Activated CD4-positive, alpha-beta memory T cell treated with anti-CD3 and anti-CD28 coated beads, Interleukin-2, amount 10 ng/mL, durations not matched to agents 7 days and 5 days (primary cell): ENCODE measurements at regions of chr10 and their contacts with region 1.

Region 1: GRCh38 chr10:99612167-99612831 is 7.9 kb downstream of the SLC25A28 start:
- DNase-seq: peak; percentile 25
- H3K4me3 Mint-ChIP-seq: no peak overlapping the region
- H3K27ac Mint-ChIP-seq: no peak overlapping the region
- H3K4me1 Mint-ChIP-seq: peaks cover 39% of the 10 kb centered on the region
- H3K27me3 Mint-ChIP-seq: no peaks in the 10 kb centered on the region

Region 2: DNA sequence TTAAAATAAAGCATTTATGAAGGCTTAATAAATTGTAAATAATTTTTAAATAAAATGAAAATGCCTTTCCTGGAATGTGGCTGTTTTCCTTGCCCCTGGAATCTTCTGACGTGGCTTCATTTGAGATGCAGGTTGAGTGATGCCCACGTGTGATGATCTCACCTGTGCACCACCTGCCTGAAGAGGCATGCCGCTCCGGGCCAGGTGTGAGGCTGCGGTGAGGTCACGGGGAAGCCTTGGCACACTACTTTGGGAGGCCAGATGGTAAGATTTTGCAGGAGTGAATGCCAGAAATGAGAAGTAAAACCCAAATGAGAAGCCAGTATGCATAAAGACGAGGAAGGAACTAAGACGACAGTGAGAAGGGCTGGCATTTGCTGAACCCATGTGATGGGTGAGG is 218.0 kb before region 1 on chr10:
- CTCF ChIA-PET with region 1: interaction called, 15 read pairs
- POLR2A ChIA-PET with region 1: no interaction called
- DNase-seq: no peak
- H3K4me3 Mint-ChIP-seq: no peak overlapping the region
- H3K27ac Mint-ChIP-seq: no peak overlapping the region
- H3K4me1 Mint-ChIP-seq: peaks cover 15% of the 10 kb centered on the region
- H3K27me3 Mint-ChIP-seq: peaks cover 4% of the 10 kb centered on the region

Region 3: GRCh38 chr10:99435986-99436638 is 176.2 kb before region 1 on chr10:
- CTCF ChIA-PET with region 1: interaction called, 26 read pairs
- POLR2A ChIA-PET with region 1: interaction called, 48 read pairs
- DNase-seq: no peak
- H3K4me3 Mint-ChIP-seq: no peak overlapping the region
- H3K27ac Mint-ChIP-seq: no peak overlapping the region
- H3K4me1 Mint-ChIP-seq: peaks cover 17% of the 10 kb centered on the region
- H3K27me3 Mint-ChIP-seq: no peaks in the 10 kb centered on the region

Region 4: DNA sequence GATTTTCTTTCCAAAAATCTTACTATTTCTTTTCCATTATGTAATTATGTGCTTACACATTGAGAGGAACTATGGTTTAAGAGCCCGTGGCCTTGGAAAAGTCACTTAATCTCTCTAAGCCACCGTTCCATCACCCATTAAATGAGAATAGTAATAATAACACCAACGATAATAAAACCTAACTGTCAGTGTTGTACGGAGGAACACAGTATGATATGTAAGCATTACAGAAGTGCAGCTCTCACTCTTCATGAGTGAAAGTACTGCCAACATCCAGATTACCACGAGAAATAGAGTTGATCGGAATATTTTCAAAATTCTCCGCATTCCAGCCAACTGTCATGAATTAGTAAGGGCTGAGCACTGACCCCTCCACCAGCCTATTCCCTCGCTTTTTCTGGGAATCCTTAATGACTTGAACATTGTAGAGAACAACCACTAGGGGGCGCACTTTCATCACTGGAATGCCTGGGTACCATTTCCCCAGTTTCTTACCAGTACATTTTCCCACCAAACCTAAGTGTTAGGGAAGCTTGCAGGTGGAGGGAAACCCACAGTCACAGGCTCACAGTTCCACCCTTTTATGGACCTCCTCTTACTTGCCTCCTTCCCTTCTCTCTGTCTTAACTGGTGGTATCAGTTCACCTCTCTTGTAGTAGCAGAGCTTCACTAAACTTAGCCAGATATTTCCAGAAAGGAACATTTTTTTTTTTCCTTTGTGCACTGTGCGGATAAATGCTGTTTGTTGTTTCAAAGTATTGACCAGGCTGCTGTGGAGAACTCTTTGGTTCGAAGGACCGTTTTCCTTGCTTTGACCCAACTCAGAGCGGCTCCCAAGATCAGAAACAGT is 51.8 kb before region 1 on chr10:
- CTCF ChIA-PET with region 1: interaction called, 28 read pairs
- POLR2A ChIA-PET with region 1: interaction called, 3 read pairs
- DNase-seq: peak; percentile 37
- H3K4me3 Mint-ChIP-seq: no peak overlapping the region
- H3K27ac Mint-ChIP-seq: no peak overlapping the region
- H3K4me1 Mint-ChIP-seq: peaks cover 15% of the 10 kb centered on the region
- H3K27me3 Mint-ChIP-seq: peaks cover 38% of the 10 kb centered on the region